ENCODE measurements at regions of chr1 and their contacts with region 1.

Region 1: DNA sequence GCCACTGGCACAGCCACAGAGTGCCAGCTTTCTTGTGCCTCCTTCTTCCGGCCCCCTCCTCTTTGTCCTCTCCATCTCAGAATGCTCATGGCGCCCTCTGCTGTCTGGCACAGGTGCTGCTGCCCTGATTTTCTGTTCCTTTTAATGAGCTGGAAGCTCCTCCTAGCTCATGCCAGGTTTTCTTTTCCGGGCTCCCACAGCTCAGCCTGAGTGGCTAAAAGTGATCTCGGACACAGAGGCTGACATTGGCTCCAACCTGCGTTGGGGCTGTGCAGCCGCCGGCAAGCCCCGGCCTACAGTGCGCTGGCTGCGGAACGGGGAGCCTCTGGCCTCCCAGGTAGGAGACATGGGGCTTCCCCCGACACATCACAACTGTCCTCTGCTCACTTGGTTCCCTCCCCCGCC is 18.7 kb downstream of the CNTN2 start:
- DNase-seq: peak; percentile 77
- ATAC-seq: peak; percentile 62
- H3K4me3 ChIP-seq: no peak overlapping the region
- H3K4me3 Mint-ChIP-seq: no peak overlapping the region
- H3K27ac ChIP-seq: no peak overlapping the region
- H3K27ac Mint-ChIP-seq: no peak overlapping the region
- H3K4me1 ChIP-seq: peaks cover 0 to 6% of the 10 kb centered on the region in 2 donors
- H3K4me1 Mint-ChIP-seq: no peaks in the 10 kb centered on the region
- H3K27me3 ChIP-seq: no peaks in the 10 kb centered on the region
- H3K27me3 Mint-ChIP-seq: no peaks in the 10 kb centered on the region
- CTCF ChIP-seq: peak; percentile 80

Region 2: DNA sequence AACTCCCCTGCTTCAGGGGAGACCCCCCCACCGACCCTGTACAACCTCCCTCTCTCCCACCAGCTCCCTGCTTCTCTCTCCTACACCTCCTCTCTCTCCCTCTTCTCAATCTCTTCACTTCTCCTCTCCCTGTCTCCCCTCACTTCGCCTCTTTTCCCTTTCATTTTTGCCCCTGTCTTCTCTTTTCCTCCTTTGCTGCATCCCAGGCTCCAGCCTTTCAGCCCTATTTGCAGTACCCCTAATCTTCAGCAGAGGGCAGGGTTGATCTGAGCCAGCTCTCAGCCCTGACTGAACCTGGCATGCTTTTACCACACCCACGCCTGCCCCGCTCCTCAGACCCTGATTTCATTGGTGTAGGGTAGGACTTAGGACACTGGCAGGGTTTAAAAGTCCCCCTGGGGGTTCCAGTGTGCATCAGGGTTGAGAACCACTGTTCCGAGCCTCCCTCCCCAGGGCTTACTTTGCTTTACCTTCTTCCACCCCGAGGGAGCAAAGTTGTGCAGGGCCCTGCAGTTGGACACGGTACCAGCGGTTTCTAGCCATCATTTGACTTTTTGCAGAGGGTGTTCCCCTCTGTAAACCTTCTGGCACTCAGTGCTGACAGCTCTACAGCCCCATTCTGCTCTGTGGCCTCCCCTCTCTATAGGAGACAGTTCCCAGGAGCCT is 86.0 kb before region 1 on chr1:
- CTCF ChIA-PET with region 1: interaction called, 94 read pairs
- POLR2A ChIA-PET with region 1: no interaction called
- intact Hi-C with region 1: no loop called
- DNase-seq: peak; percentile 75
- ATAC-seq: peak; percentile 90
- H3K4me3 ChIP-seq: no peak overlapping the region
- H3K4me3 Mint-ChIP-seq: no peak overlapping the region
- H3K27ac ChIP-seq: no peak overlapping the region
- H3K27ac Mint-ChIP-seq: no peak overlapping the region
- H3K4me1 ChIP-seq: peaks cover 18 to 25% of the 10 kb centered on the region in 2 donors
- H3K4me1 Mint-ChIP-seq: peaks cover 14% of the 10 kb centered on the region
- H3K27me3 ChIP-seq: peaks cover 0 to 16% (median 7%) of the 10 kb centered on the region in 4 experiments
- H3K27me3 Mint-ChIP-seq: peaks cover 18% of the 10 kb centered on the region
- CTCF ChIP-seq: peak; percentile 91

Region 3: GRCh38 chr1:204989266-204990058 is 72.2 kb before region 1 on chr1:
- CTCF ChIA-PET with region 1: interaction called, 50 read pairs
- POLR2A ChIA-PET with region 1: no interaction called
- intact Hi-C with region 1: loop called (anchors 1 kb)
- DNase-seq: peak; percentile 77
- ATAC-seq: peak; percentile 71
- H3K4me3 ChIP-seq: no peak overlapping the region
- H3K4me3 Mint-ChIP-seq: no peak overlapping the region
- H3K27ac ChIP-seq: no peak overlapping the region
- H3K27ac Mint-ChIP-seq: no peak overlapping the region
- H3K4me1 ChIP-seq: peaks cover 15 to 21% of the 10 kb centered on the region in 2 donors
- H3K4me1 Mint-ChIP-seq: peaks cover 22% of the 10 kb centered on the region
- H3K27me3 ChIP-seq: peaks cover 0 to 2% (median 0%) of the 10 kb centered on the region in 4 experiments
- H3K27me3 Mint-ChIP-seq: peaks cover 5% of the 10 kb centered on the region
- CTCF ChIP-seq: peak; percentile 81

Region 4: DNA sequence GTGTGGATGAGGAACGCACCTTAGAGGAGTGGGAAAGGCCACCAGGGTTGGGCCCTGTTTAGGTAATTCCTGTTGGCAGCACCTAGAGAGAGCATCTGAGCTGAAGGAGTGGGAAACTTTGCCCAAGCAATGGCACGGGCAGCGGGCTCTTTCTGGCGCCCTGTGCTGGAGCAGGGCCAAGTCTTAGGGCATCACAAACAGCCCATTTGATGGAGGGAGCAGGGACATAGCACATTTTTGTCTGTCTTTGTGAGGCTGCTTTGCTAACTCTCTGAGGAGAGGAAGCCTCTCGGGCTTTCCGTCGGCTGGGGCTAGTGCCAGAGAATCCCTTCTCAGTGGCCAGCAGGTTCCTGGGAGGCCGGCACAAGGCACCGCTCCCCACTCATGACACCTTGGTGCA is 41.2 kb before region 1 on chr1:
- CTCF ChIA-PET with region 1: no interaction called
- POLR2A ChIA-PET with region 1: no interaction called
- intact Hi-C with region 1: no loop called
- DNase-seq: no peak
- ATAC-seq: no peak
- H3K4me3 ChIP-seq: no peak overlapping the region
- H3K4me3 Mint-ChIP-seq: no peak overlapping the region
- H3K27ac ChIP-seq: no peak overlapping the region
- H3K27ac Mint-ChIP-seq: no peak overlapping the region
- H3K4me1 ChIP-seq: no peaks in the 10 kb centered on the region
- H3K4me1 Mint-ChIP-seq: no peaks in the 10 kb centered on the region
- H3K27me3 ChIP-seq: no peaks in the 10 kb centered on the region
- H3K27me3 Mint-ChIP-seq: peaks cover 13% of the 10 kb centered on the region
- CTCF ChIP-seq: no peak

Region 5: GRCh38 chr1:205071801-205072200 is 10.1 kb after region 1 on chr1:
- CTCF ChIA-PET with region 1: interaction called, 12 read pairs
- POLR2A ChIA-PET with region 1: no interaction called
- intact Hi-C with region 1: no loop called
- DNase-seq: no peak
- ATAC-seq: no peak
- H3K4me3 ChIP-seq: no peak overlapping the region
- H3K4me3 Mint-ChIP-seq: no peak overlapping the region
- H3K27ac ChIP-seq: no peak overlapping the region
- H3K27ac Mint-ChIP-seq: no peak overlapping the region
- H3K4me1 ChIP-seq: no peaks in the 10 kb centered on the region
- H3K4me1 Mint-ChIP-seq: no peaks in the 10 kb centered on the region
- H3K27me3 ChIP-seq: no peaks in the 10 kb centered on the region
- H3K27me3 Mint-ChIP-seq: no peaks in the 10 kb centered on the region
- CTCF ChIP-seq: no peak

Region 6: DNA sequence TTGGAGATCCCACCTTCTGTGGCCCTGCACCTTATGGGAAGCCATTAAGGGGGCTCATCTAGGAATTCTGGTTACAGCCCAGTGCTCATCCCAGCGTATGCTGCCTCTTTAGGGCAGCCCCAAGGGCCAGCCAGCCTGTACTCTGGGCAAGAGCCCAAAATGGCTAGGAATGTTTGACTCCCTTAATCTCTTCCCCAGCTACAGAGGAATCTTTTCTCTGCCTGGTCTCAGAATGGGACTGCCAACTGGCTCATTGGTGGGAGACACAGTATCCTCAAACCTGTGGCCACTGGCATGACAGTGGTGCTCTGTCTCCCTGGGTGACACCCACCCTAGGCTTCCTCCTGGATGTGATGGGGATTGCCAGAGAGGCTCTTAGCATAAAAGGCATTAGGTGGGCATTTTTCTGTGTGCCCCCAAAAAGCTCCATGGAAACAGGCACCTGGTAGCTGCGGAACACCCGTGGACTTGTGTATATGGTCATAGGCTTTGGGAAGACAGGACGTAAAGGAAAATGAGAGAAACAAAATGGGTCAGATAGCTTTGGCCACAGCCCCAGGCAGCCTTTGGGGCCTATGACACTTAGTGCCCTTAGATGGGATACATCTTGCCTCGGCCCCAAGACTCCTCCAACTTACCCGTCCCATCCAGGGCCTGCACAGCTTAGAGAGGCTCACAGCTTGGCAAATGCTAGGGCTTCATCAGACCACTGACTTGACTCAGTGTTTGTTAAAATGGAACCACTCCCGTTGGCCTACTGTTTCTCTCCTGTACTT is 15.7 kb after region 1 on chr1:
- CTCF ChIA-PET with region 1: interaction called, 12 read pairs
- POLR2A ChIA-PET with region 1: no interaction called
- intact Hi-C with region 1: no loop called
- DNase-seq: no peak
- ATAC-seq: no peak
- H3K4me3 ChIP-seq: no peak overlapping the region
- H3K4me3 Mint-ChIP-seq: no peak overlapping the region
- H3K27ac ChIP-seq: no peak overlapping the region
- H3K27ac Mint-ChIP-seq: no peak overlapping the region
- H3K4me1 ChIP-seq: no peaks in the 10 kb centered on the region
- H3K4me1 Mint-ChIP-seq: no peaks in the 10 kb centered on the region
- H3K27me3 ChIP-seq: no peaks in the 10 kb centered on the region
- H3K27me3 Mint-ChIP-seq: no peaks in the 10 kb centered on the region
- CTCF ChIP-seq: no peak

Region 7: DNA sequence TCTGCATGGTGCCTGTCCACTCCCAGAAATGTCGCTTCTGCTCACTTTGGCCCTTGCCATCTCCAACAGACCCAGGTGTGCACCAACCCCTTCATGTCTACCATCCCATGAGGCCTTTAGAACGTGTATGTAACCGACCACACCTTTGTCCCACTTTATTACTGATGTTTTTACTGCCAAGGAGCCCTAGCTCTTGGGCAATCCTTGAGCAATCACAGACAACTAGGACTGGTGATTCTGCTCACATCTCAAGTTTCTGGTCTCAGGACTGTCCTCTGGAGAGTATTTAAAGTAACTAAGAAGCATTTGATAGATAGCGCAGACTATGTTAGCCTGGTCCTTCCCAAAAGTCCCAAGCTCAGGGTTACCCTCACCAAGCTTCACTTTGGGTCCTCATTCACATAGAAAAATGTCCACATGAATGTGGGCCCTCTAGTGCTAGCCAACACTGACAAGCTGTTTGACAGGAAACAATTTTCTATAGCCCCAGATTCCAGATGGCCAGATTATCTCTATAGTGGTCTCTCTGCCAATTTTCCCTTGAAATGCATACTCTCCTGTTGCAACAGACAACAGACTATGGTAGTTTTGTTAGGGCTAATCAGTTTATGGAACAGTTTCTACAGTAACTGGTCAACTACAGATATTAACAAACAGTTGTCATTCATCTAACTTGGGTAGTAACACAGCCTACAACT is 29.5 kb after region 1 on chr1:
- CTCF ChIA-PET with region 1: interaction called, 10 read pairs
- POLR2A ChIA-PET with region 1: no interaction called
- intact Hi-C with region 1: no loop called
- DNase-seq: no peak
- ATAC-seq: no peak
- H3K4me3 ChIP-seq: no peak overlapping the region
- H3K4me3 Mint-ChIP-seq: no peak overlapping the region
- H3K27ac ChIP-seq: no peak overlapping the region
- H3K27ac Mint-ChIP-seq: no peak overlapping the region
- H3K4me1 ChIP-seq: no peaks in the 10 kb centered on the region
- H3K4me1 Mint-ChIP-seq: no peaks in the 10 kb centered on the region
- H3K27me3 ChIP-seq: no peaks in the 10 kb centered on the region
- H3K27me3 Mint-ChIP-seq: no peaks in the 10 kb centered on the region
- CTCF ChIP-seq: no peak